Adrenal gland (tissue), 19 donors: ENCODE measurements at regions of chr9 and their contacts with region 1.

Region 1: GRCh38 chr9:6498982-6499381 is 86.0 kb downstream of the UHRF2 start:
- DNase-seq: no peak
- H3K4me3 ChIP-seq: no peak overlapping the region
- H3K27ac ChIP-seq: no peak overlapping the region
- H3K4me1 ChIP-seq: no peaks in the 10 kb centered on the region
- H3K27me3 ChIP-seq: no peaks in the 10 kb centered on the region
- CTCF ChIP-seq: no peak
- POLR2A ChIP-seq: no peak

Region 2: GRCh38 chr9:6412487-6413364 is 86.3 kb before region 1 on chr9 and contains the start of gene UHRF2:
- intact Hi-C with region 1: loop called in 1 of 2 experiments (anchors 10 kb)
- DNase-seq: peak; percentile 99
- H3K4me3 ChIP-seq: peak within 1 kb of the TSS; percentile 53 to 100 (median 78)
- H3K27ac ChIP-seq: peak within 1 kb of the TSS; percentile 43 to 93 (median 90)
- H3K4me1 ChIP-seq: peaks cover 9 to 29% of the 10 kb centered on the region in 2 donors
- H3K27me3 ChIP-seq: no peaks in the 10 kb centered on the region
- CTCF ChIP-seq: peak in 1 of 6 experiments; percentile 4
- POLR2A ChIP-seq: peak; percentile 76 to 91
- total RNA-seq, gene UHRF2: 16.1 to 49.8 (median 32.4) TPM